Heart right ventricle (tissue), 16 donors: ENCODE measurements at regions of chr14 and their contacts with region 1.

Region 1: GRCh38 chr14:47539031-47539461 is 136.4 kb downstream of the MDGA2 start:
- DNase-seq: no peak
- ATAC-seq: no peak
- H3K4me3 ChIP-seq: no peak overlapping the region
- H3K27ac ChIP-seq: no peak overlapping the region
- H3K4me1 ChIP-seq: no peaks in the 10 kb centered on the region
- H3K27me3 ChIP-seq: peaks cover 0 to 4% (median 0%) of the 10 kb centered on the region in 7 donors
- CTCF ChIP-seq: peak in 7 of 9 donors; percentile 16 to 72 (median 29)

Region 2: DNA sequence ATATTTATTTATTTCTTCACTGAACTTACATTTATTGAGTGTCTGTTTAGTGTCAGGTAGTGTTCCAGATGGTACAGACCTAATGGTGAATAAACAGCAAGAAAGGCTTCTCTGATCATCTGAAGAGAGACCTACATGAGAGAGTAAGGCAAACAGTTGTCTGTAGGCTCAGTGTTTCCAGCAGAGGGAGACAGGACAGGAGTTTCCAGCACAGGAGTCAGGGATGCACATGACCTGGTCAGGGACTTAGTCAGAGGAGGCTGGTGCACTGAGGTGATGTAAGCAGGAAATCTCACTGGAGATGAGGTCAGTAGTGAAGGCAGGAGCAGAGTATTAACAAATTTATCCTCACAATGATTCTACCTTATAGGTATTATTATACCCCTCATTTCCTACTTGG is 96.8 kb before region 1 on chr14:
- intact Hi-C with region 1: loop called in 1 of 10 experiments (anchors 10 kb)
- DNase-seq: peak in 1 of 2 donors; percentile 5
- ATAC-seq: no peak
- H3K4me3 ChIP-seq: no peak overlapping the region
- H3K27ac ChIP-seq: no peak overlapping the region
- H3K4me1 ChIP-seq: peaks cover 0 to 8% (median 0%) of the 10 kb centered on the region in 9 donors
- H3K27me3 ChIP-seq: no peaks in the 10 kb centered on the region
- CTCF ChIP-seq: peak in 2 of 9 donors; percentile 8 to 34